Activated naive CD4-positive, alpha-beta T cell treated with anti-CD3 and anti-CD28 coated beads, Interleukin-2, amount 10 ng/mL, durations not matched to agents 7 days and 5 days (primary cell): ENCODE measurements at regions of chr17 and their contacts with region 1.

Region 1: DNA sequence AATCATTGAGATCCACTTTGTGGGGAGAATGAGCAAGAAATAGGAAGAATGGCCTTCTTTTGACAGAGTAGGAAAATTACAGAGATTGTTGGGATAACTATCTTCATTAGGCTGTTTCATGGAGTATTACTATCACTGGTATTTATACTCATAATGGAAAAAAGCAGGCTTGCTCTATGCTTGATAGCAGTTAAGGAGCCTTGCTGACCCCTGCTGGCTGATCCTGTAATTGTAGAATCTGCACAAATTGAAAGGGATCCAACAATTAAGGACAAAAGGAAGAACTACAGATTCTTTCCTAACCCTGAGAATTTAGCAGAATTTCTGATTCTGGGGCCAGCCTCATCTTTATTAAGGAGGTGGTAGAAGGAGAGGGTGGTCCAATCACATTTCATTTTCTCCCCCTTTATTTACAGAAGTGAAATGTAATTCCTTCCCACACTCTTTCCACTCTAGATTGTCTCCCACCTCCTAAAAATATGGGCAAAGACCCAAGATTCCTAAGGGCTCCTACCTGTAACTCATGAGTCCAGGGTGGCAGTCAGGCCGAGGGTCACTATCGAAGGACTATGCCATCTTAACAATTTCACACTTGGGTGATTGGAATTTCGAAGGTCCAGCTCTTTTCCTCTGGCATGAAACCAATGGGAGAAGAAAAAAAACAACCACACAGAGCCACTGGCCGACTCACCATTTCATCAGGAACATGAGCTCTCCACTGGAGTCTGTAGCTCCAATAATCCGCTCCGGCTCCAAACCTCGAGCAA is 26.3 kb downstream of the NFE2L1 start:
- DNase-seq: peak; percentile 87
- H3K4me3 Mint-ChIP-seq: no peak overlapping the region
- H3K27ac Mint-ChIP-seq: no peak overlapping the region
- H3K4me1 Mint-ChIP-seq: peaks cover 3% of the 10 kb centered on the region
- H3K27me3 Mint-ChIP-seq: no peaks in the 10 kb centered on the region

Region 2: DNA sequence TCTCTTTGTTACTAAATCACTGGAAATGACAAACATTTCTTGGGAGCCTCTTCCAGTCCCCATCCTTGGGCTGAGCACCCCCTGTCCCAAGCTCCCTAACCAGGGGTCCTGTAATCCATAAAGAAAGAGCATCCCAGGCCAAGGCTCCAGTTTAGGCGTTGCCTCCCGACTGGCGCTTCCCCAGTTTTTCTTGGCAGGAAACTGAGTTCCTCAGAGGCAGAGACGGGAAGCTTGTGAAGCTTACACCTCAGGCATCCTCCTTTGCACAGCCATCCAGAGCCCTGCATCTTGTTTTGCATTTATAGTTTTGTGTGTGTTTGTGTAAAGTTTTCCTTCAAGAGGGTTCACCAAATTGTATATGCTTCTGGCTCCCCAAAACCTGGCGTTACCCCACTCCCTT is 44.0 kb before region 1 on chr17:
- CTCF ChIA-PET with region 1: interaction called, 115 read pairs
- DNase-seq: no peak
- H3K4me3 Mint-ChIP-seq: no peak overlapping the region
- H3K27ac Mint-ChIP-seq: no peak overlapping the region
- H3K4me1 Mint-ChIP-seq: peaks cover 12% of the 10 kb centered on the region
- H3K27me3 Mint-ChIP-seq: peaks cover 89% of the 10 kb centered on the region

Region 3: DNA sequence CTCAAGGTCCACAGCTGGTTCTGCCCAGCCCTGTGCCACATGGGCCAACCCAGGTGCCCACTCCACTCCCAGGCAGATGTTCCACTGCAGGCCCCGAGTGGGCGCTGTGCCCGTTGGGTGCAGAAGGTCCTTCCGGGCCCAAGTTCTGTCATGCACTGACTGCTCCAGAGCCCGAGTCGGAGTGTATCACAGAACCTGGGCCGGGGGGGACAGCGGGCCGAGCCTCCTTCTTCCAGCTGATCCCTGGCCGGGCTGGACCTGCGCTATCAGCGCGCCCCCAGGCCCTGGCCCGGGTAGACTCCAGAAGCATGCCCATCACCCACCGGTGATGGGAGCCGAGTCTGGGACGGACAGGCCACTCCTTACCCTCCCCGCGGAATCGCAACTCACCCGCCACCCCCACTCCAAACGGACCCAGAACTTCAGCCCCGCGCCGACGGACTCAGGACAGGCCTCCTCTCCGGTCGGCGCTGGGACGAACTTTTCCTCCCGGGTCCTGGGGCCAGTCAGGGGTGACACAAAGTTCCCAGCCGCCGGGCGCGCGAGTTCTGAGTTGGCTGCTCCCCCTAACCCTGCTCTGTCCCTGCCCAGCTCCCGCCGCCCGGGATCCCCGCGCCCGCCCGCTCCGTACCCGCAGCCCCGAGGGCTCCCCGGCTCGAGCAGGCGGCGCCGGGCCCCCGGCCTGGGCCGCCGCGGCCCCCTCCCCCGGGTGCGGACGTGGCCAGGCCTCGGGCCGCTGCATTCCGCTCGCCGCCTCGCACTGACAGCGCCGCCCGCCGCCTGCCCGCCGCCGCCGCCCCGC is 37.3 kb before region 1 on chr17 and contains the start of gene COPZ2:
- CTCF ChIA-PET with region 1: interaction called, 36 read pairs
- DNase-seq: peak; percentile 77
- H3K4me3 Mint-ChIP-seq: peak within 1 kb of the TSS; percentile 77
- H3K27ac Mint-ChIP-seq: no peak within 1 kb of the TSS
- H3K4me1 Mint-ChIP-seq: peaks cover 21% of the 10 kb centered on the region
- H3K27me3 Mint-ChIP-seq: peaks cover 85% of the 10 kb centered on the region

Region 4: DNA sequence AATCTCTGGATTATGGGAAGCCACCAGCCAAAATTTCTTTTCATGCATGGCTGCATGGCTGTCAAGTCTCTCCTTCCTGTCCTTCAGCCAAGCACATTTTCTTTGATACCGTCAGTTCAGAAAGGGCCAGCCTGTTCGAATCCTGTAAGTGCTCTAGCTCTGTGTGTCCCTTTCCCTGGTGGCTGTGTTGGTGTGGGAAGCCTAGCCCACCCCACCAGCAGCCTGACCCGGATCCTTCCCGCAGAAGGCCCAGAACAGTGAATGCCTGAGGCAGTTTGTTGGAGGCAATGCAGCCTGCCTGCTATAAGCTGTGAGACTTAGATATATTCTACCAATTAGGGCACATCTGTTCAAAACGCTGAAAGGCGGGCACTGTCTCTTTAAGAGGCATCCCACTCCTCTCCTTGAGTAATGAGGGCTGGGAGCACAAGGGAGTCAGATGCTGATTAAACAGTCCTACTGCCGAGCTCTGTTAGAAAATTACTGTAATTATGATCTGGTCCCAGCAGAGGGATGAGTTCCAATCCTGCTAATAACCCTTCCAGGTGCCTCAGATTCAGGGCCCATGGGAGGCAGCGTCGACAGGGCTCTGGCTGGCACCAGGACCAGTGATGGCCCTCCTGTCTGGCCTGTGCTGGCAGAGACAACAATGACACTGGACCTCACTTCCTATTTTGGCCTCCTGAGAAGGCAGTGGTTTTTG is 51.5 kb after region 1 on chr17:
- CTCF ChIA-PET with region 1: interaction called, 64 read pairs
- DNase-seq: no peak
- H3K4me3 Mint-ChIP-seq: no peak overlapping the region
- H3K27ac Mint-ChIP-seq: no peak overlapping the region
- H3K4me1 Mint-ChIP-seq: no peaks in the 10 kb centered on the region
- H3K27me3 Mint-ChIP-seq: no peaks in the 10 kb centered on the region

Region 5: DNA sequence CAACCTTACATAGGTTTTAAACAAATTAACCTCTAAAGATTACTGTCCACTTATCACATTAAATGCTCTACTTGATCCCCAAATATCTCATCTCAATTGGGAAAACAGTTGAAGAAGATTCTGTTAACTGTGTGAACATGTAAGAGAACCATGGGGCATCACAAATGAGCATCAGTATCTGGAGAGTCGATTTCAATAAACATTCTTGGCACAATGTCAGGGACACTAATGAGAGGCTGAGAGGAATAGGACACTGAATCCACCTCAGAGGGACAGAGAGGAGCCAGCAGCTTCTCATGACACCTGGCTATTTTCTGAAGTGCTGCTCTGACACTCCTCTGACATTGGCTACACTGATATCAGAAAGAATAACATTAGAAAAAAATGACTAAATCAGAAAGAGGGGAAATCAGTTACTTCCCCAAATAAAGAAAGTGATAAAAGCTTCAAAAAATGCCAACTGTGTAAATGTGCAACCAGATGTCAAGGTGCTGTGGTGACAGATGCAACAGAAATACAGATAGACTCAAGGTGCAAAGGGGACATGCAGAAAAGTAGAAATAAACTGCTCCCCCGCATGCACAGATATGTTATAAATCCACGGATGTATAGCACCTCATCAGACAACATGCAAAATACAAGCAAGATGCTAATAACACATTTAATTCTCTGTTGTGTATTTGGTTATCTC is 100.5 kb after region 1 on chr17:
- CTCF ChIA-PET with region 1: no interaction called
- DNase-seq: no peak
- H3K4me3 Mint-ChIP-seq: no peak overlapping the region
- H3K27ac Mint-ChIP-seq: no peak overlapping the region
- H3K4me1 Mint-ChIP-seq: peaks cover 20% of the 10 kb centered on the region
- H3K27me3 Mint-ChIP-seq: no peaks in the 10 kb centered on the region

Region 6: GRCh38 chr17:48254896-48255295 is 180.4 kb after region 1 on chr17:
- CTCF ChIA-PET with region 1: no interaction called
- DNase-seq: no peak
- H3K4me3 Mint-ChIP-seq: no peak overlapping the region
- H3K27ac Mint-ChIP-seq: no peak overlapping the region
- H3K4me1 Mint-ChIP-seq: no peaks in the 10 kb centered on the region
- H3K27me3 Mint-ChIP-seq: no peaks in the 10 kb centered on the region